ENCODE measurements at regions of chr20 and their contacts with region 1.

Region 1: DNA sequence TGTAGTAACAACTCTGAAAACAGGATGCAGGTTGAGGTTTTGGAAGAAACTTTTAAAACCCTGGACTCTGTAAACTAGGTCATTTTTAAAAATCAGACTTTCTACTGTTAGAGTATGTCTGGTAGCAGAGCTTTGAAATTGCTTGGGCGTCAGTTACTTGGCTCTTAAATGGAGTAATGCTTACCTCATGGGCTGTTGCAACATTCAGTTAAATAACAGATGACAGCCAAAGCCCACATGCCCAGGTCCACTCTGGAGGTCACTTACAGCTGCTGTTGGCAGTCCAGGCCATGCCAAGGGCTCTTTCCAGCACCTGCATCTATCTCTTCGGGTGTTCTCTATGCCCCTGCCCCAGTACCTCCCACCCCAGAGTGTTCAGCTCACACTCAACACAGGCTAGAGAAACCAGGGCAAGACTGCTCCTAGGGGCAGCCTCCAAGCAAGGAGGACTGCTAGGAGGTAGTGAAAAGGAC is 96.4 kb downstream of the BANF2 start:
- DNase-seq: peak; percentile 81

Region 2: GRCh38 chr20:17430125-17430950 is 365.8 kb before region 1 on chr20:
- intact Hi-C with region 1: no loop called
- DNase-seq: no peak

Region 3: GRCh38 chr20:17776551-17776950 is 19.6 kb before region 1 on chr20:
- intact Hi-C with region 1: loop called in 1 of 2 experiments (anchors 2 kb)
- DNase-seq: no peak

Region 4: GRCh38 chr20:17849901-17850683 is 54.0 kb after region 1 on chr20:
- intact Hi-C with region 1: loop called in 1 of 2 experiments (anchors 5 kb)
- DNase-seq: peak; percentile 94

Measured in posterior vena cava (tissue), 2 donors.